Activated CD4-positive, alpha-beta T cell treated with anti-CD3 and anti-CD28 coated beads, Interleukin-2, amount 10 ng/mL, durations not matched to agents 24 days and 14 days (primary cell): ENCODE measurements at regions of chr3 and their contacts with region 1.

Region 1: GRCh38 chr3:42581709-42582473 is at the start of gene SEC22C:
- DNase-seq: peak; percentile 98
- H3K4me3 Mint-ChIP-seq: peak within 1 kb of the TSS; percentile 93
- H3K27ac Mint-ChIP-seq: peak within 1 kb of the TSS; percentile 93
- H3K4me1 Mint-ChIP-seq: peaks cover 52% of the 10 kb centered on the region
- H3K27me3 Mint-ChIP-seq: no peaks in the 10 kb centered on the region
- total RNA-seq, gene SEC22C: 36.3 and 39.6 TPM in 2 replicates

Region 2: GRCh38 chr3:42556089-42556632 is 25.7 kb before region 1 on chr3:
- intact Hi-C with region 1: loop called (anchors 1 kb)
- DNase-seq: peak; percentile 87
- H3K4me3 Mint-ChIP-seq: peak overlapping the region; percentile 73
- H3K27ac Mint-ChIP-seq: peak overlapping the region; percentile 96
- H3K4me1 Mint-ChIP-seq: peaks cover 32% of the 10 kb centered on the region
- H3K27me3 Mint-ChIP-seq: no peaks in the 10 kb centered on the region

Region 3: GRCh38 chr3:42600111-42600988 is 18.5 kb after region 1 on chr3 and contains the start of gene NKTR:
- intact Hi-C with region 1: loop called (anchors 1 kb)
- DNase-seq: peak; percentile 100
- H3K4me3 Mint-ChIP-seq: peak within 1 kb of the TSS; percentile 94
- H3K27ac Mint-ChIP-seq: peak within 1 kb of the TSS; percentile 98
- H3K4me1 Mint-ChIP-seq: peaks cover 30% of the 10 kb centered on the region
- H3K27me3 Mint-ChIP-seq: no peaks in the 10 kb centered on the region
- total RNA-seq, gene NKTR: 79.5 and 80.9 TPM in 2 replicates

Region 4: DNA sequence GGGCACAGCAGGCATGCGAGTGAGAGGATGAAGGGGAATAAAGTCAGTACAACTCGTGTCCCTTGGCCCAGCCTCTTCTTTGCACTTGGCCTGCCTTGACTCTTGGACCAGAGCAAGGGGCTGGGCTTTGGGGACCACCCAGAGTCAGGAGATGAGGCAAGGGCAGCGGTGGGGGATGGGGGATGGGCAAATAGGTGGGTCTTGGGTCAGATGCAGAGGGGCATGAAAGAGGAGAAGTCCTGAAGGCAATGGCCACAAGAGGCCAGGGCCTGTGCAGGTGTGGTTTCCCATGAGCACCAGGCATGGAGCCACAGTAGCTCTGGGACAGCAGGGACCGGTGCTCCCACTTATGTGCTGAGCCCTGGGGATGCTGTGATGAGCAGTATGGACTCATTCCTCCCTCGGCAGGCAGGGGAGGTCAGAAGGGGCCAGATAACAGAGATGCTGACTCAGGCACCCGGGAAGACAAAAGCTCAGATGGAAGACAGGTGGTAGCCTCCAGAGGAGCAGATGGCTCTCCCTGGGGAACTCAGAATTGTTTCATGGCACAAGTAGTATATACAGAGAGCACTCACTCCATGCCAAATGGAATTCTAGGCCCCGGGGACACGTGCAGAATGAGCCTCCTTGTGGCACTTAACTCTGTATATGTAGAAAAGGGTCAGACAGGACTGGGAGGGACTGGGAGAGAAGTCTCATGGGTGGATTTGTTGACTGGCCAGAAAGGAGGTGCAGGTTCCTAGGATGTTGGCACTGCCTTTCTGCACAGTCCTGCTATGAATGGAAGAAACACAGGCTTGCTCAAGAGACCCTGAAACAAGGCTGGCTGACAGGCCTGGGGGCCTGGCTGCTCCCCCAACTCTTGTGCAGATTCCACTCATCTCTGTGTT is 85.9 kb after region 1 on chr3:
- intact Hi-C with region 1: no loop called
- DNase-seq: no peak
- H3K4me3 Mint-ChIP-seq: no peak overlapping the region
- H3K27ac Mint-ChIP-seq: no peak overlapping the region
- H3K4me1 Mint-ChIP-seq: no peaks in the 10 kb centered on the region
- H3K27me3 Mint-ChIP-seq: peaks cover 4% of the 10 kb centered on the region

Region 5: GRCh38 chr3:42749753-42750231 is 167.9 kb after region 1 on chr3:
- intact Hi-C with region 1: loop called (anchors 1 kb)
- DNase-seq: peak; percentile 71
- H3K4me3 Mint-ChIP-seq: no peak overlapping the region
- H3K27ac Mint-ChIP-seq: no peak overlapping the region
- H3K4me1 Mint-ChIP-seq: peaks cover 22% of the 10 kb centered on the region
- H3K27me3 Mint-ChIP-seq: peaks cover 4% of the 10 kb centered on the region

Region 6: DNA sequence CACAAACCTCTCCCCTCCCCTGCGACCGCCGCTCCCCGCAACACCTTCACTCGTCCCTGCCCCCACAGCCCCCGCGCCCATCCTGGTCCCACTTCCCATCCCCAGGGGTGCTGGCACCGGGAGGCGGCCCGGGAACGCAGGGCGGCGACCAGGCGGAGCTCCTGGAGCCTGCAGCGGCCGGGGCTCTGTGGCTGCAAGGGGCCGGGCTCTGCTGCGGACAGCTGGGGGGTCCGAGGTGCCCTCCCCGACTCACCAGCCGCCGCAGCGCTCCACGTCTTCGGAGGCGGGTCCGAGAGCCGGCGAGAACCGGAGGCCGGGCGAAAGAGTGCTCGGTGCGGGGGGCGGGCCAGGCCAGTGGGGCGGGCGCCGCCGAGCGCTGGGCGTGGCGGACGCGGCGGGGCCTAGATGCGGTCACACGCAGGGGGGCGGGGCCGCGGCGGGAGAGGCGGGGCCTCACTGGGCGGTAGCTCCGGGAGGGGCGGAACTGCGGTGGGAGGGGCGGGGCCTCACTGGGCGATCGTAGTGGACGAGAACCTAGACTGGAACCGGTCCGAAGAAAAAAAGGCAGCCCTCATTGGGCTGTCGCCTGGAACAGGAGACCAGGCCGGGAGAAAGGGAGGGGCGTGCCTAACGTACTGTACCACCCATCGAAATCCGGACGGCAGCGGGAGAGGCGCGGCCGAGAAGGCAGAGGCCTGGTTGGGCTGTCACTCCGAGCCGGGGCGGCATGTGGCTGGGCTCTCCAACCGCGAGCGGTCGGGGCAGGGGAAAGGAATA is 1040.0 kb after region 1 on chr3 and contains the start of gene ANO10:
- intact Hi-C with region 1: loop called (anchors 5 kb)
- DNase-seq: peak; percentile 98
- H3K4me3 Mint-ChIP-seq: peak within 1 kb of the TSS; percentile 95
- H3K27ac Mint-ChIP-seq: peak within 1 kb of the TSS; percentile 89
- H3K4me1 Mint-ChIP-seq: peaks cover 21% of the 10 kb centered on the region
- H3K27me3 Mint-ChIP-seq: peaks cover 16% of the 10 kb centered on the region
- total RNA-seq, gene ANO10: 3.5 and 6.0 TPM in 2 replicates